Activated B cell treated with CpG ODN at 0.5 μM for 24 hours (primary cell): ENCODE measurements at regions of chr1 and their contacts with region 1.

Region 1: DNA sequence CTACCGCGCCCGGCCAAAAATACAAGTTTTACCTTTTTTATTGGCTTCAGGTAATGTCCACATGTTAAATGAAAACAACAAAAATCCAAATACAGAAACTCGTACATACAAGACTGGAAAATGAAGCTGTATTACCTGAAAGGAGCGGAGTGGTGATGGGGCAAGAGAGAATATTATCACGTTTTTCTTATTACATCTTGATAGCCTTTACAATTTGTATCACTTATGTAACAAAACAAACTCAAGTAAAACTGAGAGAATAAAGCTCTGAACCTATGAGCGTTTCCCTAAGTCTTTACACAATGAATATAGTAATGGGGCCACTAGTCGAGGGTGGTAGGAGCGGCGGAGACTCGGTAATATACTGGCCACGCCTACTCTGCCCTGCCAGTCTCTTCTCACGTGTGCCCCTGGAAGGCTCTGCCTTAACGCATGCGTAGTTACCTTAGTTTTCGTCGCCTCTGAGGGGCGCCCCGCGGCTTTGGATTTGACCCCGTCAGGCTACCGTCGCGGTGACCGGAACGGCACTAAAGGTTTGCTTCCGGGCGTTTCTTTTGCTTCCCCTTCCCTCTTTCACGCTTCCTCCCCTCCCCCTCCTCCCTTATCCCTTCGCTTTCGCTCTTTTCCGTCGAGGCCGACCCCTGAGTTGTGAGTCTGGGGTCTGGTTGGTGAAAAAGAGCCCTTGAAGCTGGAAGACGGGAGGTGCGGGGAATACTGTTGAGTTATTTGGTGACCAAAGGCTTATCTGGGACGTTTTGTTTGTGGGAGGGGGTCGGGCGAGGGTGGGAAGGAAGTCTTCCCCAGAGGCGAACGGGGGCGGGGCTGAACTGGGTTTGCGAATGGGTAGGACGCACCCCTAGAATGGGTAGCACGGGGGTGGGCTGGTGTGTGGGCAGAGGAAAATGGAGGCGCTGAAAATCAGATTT is at the start of gene SETDB1:
- DNase-seq: peak; percentile 79
- ATAC-seq: peak; percentile 90
- H3K4me3 Mint-ChIP-seq: peak within 1 kb of the TSS; percentile 98
- H3K27ac Mint-ChIP-seq: peak within 1 kb of the TSS; percentile 98
- H3K4me1 Mint-ChIP-seq: peaks cover 35% of the 10 kb centered on the region
- H3K27me3 Mint-ChIP-seq: no peaks in the 10 kb centered on the region
- CTCF ChIP-seq: no peak
- total RNA-seq, gene SETDB1: 101 and 105 TPM in 2 replicates

Region 2: GRCh38 chr1:150127868-150128267 is 798.2 kb before region 1 on chr1:
- CTCF ChIA-PET with region 1: no interaction called
- POLR2A ChIA-PET with region 1: no interaction called
- intact Hi-C with region 1: no loop called
- DNase-seq: no peak
- ATAC-seq: no peak
- H3K4me3 Mint-ChIP-seq: no peak overlapping the region
- H3K27ac Mint-ChIP-seq: no peak overlapping the region
- H3K4me1 Mint-ChIP-seq: peaks cover 14% of the 10 kb centered on the region
- H3K27me3 Mint-ChIP-seq: no peaks in the 10 kb centered on the region
- CTCF ChIP-seq: no peak

Region 3: GRCh38 chr1:150629115-150629928 is 296.8 kb before region 1 on chr1 and contains the start of gene ENSA:
- CTCF ChIA-PET with region 1: interaction called, 4 read pairs
- POLR2A ChIA-PET with region 1: interaction called, 3 read pairs
- intact Hi-C with region 1: loop called (anchors 2 kb)
- DNase-seq: peak; percentile 84
- ATAC-seq: peak; percentile 88
- H3K4me3 Mint-ChIP-seq: no peak within 1 kb of the TSS
- H3K27ac Mint-ChIP-seq: no peak within 1 kb of the TSS
- H3K4me1 Mint-ChIP-seq: peaks cover 21% of the 10 kb centered on the region
- H3K27me3 Mint-ChIP-seq: no peaks in the 10 kb centered on the region
- CTCF ChIP-seq: no peak
- total RNA-seq, gene ENSA: 202 and 227 TPM in 2 replicates

Region 4: GRCh38 chr1:150765296-150765976 is 160.6 kb before region 1 on chr1 and contains the start of gene CTSS:
- CTCF ChIA-PET with region 1: interaction called, 22 read pairs
- POLR2A ChIA-PET with region 1: interaction called, 10 read pairs
- intact Hi-C with region 1: loop called (anchors 1 kb)
- DNase-seq: no peak
- ATAC-seq: peak; percentile 88
- H3K4me3 Mint-ChIP-seq: peak within 1 kb of the TSS; percentile 93
- H3K27ac Mint-ChIP-seq: peak within 1 kb of the TSS; percentile 97
- H3K4me1 Mint-ChIP-seq: peaks cover 55% of the 10 kb centered on the region
- H3K27me3 Mint-ChIP-seq: no peaks in the 10 kb centered on the region
- CTCF ChIP-seq: no peak
- total RNA-seq, gene CTSS: 162 and 165 TPM in 2 replicates

Region 5: GRCh38 chr1:150876119-150876454 is 50.0 kb before region 1 on chr1:
- CTCF ChIA-PET with region 1: interaction called, 3 read pairs
- POLR2A ChIA-PET with region 1: interaction called, 6 read pairs
- intact Hi-C with region 1: loop called (anchors 1 kb)
- DNase-seq: no peak
- ATAC-seq: peak; percentile 32
- H3K4me3 Mint-ChIP-seq: peak overlapping the region; percentile 92
- H3K27ac Mint-ChIP-seq: peak overlapping the region; percentile 88
- H3K4me1 Mint-ChIP-seq: peaks cover 31% of the 10 kb centered on the region
- H3K27me3 Mint-ChIP-seq: no peaks in the 10 kb centered on the region
- CTCF ChIP-seq: no peak

Region 6: DNA sequence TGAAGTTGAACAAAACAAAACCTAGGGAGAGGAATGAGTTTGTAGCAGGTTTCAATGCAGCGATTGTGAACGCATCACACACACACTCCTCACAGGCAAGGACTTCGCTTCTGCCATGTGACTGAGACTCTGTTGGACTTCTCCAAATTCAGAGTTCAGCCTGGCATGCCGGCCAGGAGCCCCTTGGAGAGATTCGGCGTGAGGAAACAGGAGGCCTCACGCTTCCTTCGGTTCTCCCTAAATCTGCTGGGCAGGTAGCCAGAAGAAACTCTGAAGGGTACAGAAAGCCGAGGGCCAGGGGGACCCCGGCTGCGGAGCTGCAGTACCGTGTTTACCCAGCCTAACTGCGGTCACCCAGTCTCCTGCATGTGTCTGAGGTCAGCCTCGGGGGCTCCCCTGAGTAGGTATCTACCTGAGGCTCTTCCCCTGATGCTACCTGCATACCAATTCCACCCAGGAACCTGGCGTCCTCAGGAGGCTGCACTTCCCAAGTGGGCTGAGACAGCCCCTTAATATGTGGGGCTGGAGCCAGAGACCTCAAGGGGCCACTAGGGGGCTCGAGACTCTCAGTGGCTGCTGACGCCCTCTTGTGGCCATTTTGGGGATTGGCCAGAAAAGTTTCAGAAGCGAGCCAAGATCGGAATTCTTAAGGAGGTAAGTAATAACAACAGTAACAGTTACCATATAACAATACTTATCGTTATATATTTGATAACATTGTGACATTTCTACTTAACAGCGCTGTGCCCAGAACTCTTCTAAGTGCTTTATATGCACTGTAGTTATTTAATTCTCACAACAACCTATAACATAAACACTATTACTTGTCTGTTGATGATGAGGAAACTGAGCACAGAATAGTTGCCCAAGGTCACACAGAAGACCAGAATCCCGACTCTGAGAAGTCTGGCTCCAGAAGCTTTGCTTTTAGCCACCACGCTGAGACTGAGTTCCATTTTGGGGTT is 53.3 kb after region 1 on chr1:
- CTCF ChIA-PET with region 1: interaction called, 3 read pairs
- POLR2A ChIA-PET with region 1: no interaction called
- intact Hi-C with region 1: loop called (anchors 1 kb)
- DNase-seq: peak; percentile 72
- ATAC-seq: peak; percentile 59
- H3K4me3 Mint-ChIP-seq: peak overlapping the region; percentile 69
- H3K27ac Mint-ChIP-seq: peak overlapping the region; percentile 57
- H3K4me1 Mint-ChIP-seq: peaks cover 35% of the 10 kb centered on the region
- H3K27me3 Mint-ChIP-seq: no peaks in the 10 kb centered on the region
- CTCF ChIP-seq: peak; percentile 100

Region 7: DNA sequence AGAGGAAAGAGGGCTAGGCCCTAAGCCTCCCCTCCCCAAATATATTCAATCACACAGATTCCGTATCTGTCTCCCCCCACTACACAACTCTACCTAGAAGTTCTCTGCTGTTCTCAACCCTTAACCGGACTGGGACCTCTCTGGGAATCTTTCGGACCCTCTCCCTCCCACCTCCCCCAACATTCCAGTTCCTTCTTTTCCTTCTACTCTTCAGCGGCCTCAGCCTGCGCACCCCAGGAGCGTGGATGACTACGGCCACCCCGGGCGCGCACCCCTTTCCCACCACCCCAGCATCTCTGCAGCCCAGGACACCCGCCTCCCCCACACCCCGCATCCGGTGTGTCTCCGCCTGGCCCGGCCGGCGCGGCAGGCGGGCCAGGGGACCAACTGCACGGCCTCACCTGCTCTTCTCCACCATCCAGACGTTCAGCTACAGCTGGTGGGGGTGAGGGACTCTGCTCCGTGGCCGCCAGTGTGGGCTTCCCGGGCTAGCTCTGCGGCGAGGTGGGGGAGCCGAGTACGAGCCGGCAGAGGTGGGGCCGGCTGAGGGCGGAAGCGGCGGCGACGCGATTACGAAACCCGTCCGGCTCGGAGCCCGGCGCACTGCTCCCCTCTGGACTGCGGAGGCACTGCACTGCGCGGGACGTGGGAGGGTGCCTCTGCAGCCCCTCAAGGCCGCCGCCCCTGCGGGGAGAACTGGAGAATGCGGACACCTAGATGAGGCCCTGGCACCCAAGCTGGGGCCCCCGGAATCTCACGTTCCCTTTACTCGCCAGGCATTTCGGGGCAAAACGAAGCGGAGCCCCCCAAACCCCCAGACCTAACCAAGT is 133.2 kb after region 1 on chr1 and contains the start of gene CDC42SE1:
- CTCF ChIA-PET with region 1: no interaction called
- POLR2A ChIA-PET with region 1: no interaction called
- intact Hi-C with region 1: loop called (anchors 5 kb)
- DNase-seq: peak; percentile 82
- ATAC-seq: peak; percentile 88
- H3K4me3 Mint-ChIP-seq: peak within 1 kb of the TSS; percentile 98
- H3K27ac Mint-ChIP-seq: peak within 1 kb of the TSS; percentile 93
- H3K4me1 Mint-ChIP-seq: peaks cover 54% of the 10 kb centered on the region
- H3K27me3 Mint-ChIP-seq: no peaks in the 10 kb centered on the region
- CTCF ChIP-seq: no peak
- total RNA-seq, gene CDC42SE1: 139 and 148 TPM in 2 replicates

Region 8: GRCh38 chr1:151222130-151222529 is 296.1 kb after region 1 on chr1:
- CTCF ChIA-PET with region 1: no interaction called
- POLR2A ChIA-PET with region 1: no interaction called
- intact Hi-C with region 1: no loop called
- DNase-seq: no peak
- ATAC-seq: no peak
- H3K4me3 Mint-ChIP-seq: no peak overlapping the region
- H3K27ac Mint-ChIP-seq: no peak overlapping the region
- H3K4me1 Mint-ChIP-seq: peaks cover 5% of the 10 kb centered on the region
- H3K27me3 Mint-ChIP-seq: no peaks in the 10 kb centered on the region
- CTCF ChIP-seq: no peak

Region 9: DNA sequence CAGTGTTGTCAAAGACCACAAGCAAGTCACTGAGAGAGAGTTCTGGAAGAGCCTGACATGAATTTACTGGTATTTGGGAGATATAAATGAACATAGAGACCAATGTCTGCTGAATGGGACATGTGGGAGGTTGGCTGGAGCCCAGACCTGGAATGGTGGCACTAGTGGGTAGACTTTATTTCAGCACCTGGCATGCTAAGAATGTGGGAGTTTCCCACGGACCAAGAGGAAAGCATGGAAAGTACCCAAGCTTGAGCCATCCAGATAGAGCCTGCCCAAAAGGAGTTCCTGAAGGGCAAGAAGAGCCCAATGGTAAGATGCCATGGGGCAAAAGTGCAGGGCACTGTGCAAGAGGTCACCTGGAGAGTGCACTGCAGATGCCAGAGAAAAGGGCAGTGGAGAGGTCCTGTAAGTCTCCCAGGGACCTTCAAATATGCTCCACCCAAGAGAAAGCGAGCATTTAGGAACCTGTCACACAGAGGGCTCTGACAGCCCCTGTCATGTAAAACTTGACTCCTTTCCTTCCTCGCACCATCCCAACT is 347.9 kb after region 1 on chr1:
- CTCF ChIA-PET with region 1: no interaction called
- POLR2A ChIA-PET with region 1: interaction called, 13 read pairs
- intact Hi-C with region 1: no loop called
- DNase-seq: no peak
- ATAC-seq: no peak
- H3K4me3 Mint-ChIP-seq: no peak overlapping the region
- H3K27ac Mint-ChIP-seq: no peak overlapping the region
- H3K4me1 Mint-ChIP-seq: peaks cover 32% of the 10 kb centered on the region
- H3K27me3 Mint-ChIP-seq: no peaks in the 10 kb centered on the region
- CTCF ChIP-seq: no peak

Region 10: GRCh38 chr1:151639466-151639865 is 713.4 kb after region 1 on chr1:
- CTCF ChIA-PET with region 1: no interaction called
- POLR2A ChIA-PET with region 1: no interaction called
- intact Hi-C with region 1: no loop called
- DNase-seq: no peak
- ATAC-seq: no peak
- H3K4me3 Mint-ChIP-seq: no peak overlapping the region
- H3K27ac Mint-ChIP-seq: no peak overlapping the region
- H3K4me1 Mint-ChIP-seq: peaks cover 9% of the 10 kb centered on the region
- H3K27me3 Mint-ChIP-seq: no peaks in the 10 kb centered on the region
- CTCF ChIP-seq: no peak